Gastrocnemius medialis (tissue), 4 donors: ENCODE measurements at regions of chr20 and their contacts with region 1.

Region 1: GRCh38 chr20:31698803-31699718 is 23.6 kb downstream of the BCL2L1 start:
- DNase-seq: peak; percentile 83 to 87
- ATAC-seq: peak; percentile 96 to 97
- H3K4me3 ChIP-seq: peak overlapping the region in 1 of 4 donors; percentile 30
- H3K27ac ChIP-seq: peak overlapping the region; percentile 86 to 93 (median 90)
- H3K4me1 ChIP-seq: peaks cover 75 to 87% of the 10 kb centered on the region in 2 donors
- H3K27me3 ChIP-seq: no peaks in the 10 kb centered on the region
- CTCF ChIP-seq: no peak
- POLR2A ChIP-seq: peak; percentile 54 to 65

Region 2: GRCh38 chr20:31712564-31713311 is 13.7 kb after region 1 on chr20:
- in situ Hi-C with region 1: no loop called
- intact Hi-C with region 1: loop called (anchors 1 kb)
- DNase-seq: peak; percentile 96 to 97
- ATAC-seq: peak; percentile 76 to 77
- H3K4me3 ChIP-seq: peak overlapping the region; percentile 34 to 48 (median 40)
- H3K27ac ChIP-seq: peak overlapping the region; percentile 97 to 98 (median 97)
- H3K4me1 ChIP-seq: peaks cover 90 to 95% of the 10 kb centered on the region in 2 donors
- H3K27me3 ChIP-seq: no peaks in the 10 kb centered on the region
- CTCF ChIP-seq: no peak
- POLR2A ChIP-seq: peak; percentile 55 to 69